ENCODE measurements at regions of chr2 and their contacts with region 1.

Region 1: DNA sequence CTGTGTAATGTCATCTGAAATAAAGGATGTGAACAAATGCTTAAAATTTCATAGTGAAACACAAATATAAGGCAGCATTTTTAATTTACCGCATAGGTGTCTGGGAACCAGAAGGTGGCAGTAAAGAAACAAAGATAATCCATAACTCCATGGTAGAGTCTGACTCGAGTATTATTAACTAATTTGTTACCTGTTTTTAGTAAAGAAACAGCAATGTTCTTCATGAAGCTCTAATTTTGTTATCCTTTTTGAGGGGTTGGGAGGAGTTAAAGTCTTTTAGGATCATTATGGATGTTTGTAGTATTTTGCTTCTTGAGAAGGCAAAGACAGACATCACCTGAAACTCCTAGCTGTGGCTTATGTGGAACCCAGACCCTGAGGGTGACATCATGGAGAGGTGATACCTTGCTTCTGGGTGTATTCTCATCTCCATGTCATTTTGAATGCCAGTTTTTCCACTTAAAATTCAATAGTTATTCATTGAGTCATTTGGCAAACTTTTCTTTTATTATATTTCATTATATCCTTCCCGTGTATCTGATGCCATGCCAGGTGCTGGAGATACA is 286.2 kb upstream of the EPAS1 start:
- DNase-seq: peak; percentile 62 to 72
- ATAC-seq: peak; percentile 73 to 92; a peak in 5 of 6 replicates
- H3K4me3 ChIP-seq: no peak overlapping the region
- H3K27ac ChIP-seq: peak overlapping the region; percentile 12 to 56; a peak in 4 of 6 replicates
- H3K4me1 ChIP-seq: peaks cover 19% of the 10 kb centered on the region
- CTCF ChIP-seq: peak; percentile 96
- EP300 ChIP-seq: no peak
- POLR2A ChIP-seq: no peak
- RAD21 ChIP-seq: peak; percentile 94 to 98

Region 2: GRCh38 chr2:45889053-45889452 is 122.0 kb before region 1 on chr2:
- CTCF ChIA-PET with region 1: no interaction called
- POLR2A ChIA-PET with region 1: no interaction called
- DNase-seq: peak in 1 of 2 experiments; percentile 18
- ATAC-seq: peak; percentile 77 to 83; a peak in 5 of 6 replicates
- H3K4me3 ChIP-seq: no peak overlapping the region
- H3K27ac ChIP-seq: no peak overlapping the region
- H3K4me1 ChIP-seq: no peaks in the 10 kb centered on the region
- CTCF ChIP-seq: no peak
- EP300 ChIP-seq: no peak
- POLR2A ChIP-seq: no peak
- RAD21 ChIP-seq: no peak

Region 3: GRCh38 chr2:46029332-46029811 is 18.4 kb after region 1 on chr2:
- CTCF ChIA-PET with region 1: interaction called, 38 read pairs
- POLR2A ChIA-PET with region 1: no interaction called
- DNase-seq: peak in 1 of 2 experiments; percentile 57
- ATAC-seq: peak in 1 of 2 experiments; percentile 35; a peak in 3 of 6 replicates
- H3K4me3 ChIP-seq: no peak overlapping the region
- H3K27ac ChIP-seq: peak overlapping the region in 1 of 2 experiments; percentile 1; a peak in 2 of 6 replicates
- H3K4me1 ChIP-seq: peaks cover 33% of the 10 kb centered on the region
- CTCF ChIP-seq: peak; percentile 42; the same call in 2 of the 3 replicates
- EP300 ChIP-seq: no peak
- POLR2A ChIP-seq: no peak
- RAD21 ChIP-seq: peak; percentile 18 to 32; a peak in 3 of 5 replicates

Region 4: DNA sequence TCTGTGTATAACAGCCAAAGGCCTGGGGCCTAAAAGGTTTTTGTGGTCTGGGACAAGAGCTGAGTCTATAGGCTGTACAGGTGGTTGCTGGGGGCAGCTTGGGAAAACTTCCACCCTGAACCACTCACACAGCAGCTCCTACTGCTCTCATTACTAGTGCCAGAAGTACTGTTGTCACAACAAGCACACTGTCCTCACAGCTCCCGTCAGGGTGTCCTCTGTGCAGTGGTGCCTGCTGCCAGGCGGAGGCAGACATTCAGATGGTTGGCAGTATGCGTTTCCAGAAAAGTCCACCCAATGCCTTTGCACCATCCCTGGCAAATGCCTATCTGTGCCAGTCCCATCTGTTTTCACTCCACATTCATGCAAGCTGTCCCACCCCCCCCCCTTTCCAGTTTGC is 344.7 kb after region 1 on chr2:
- CTCF ChIA-PET with region 1: interaction called, 25 read pairs
- POLR2A ChIA-PET with region 1: no interaction called
- DNase-seq: no peak
- ATAC-seq: no peak
- H3K4me3 ChIP-seq: no peak overlapping the region
- H3K27ac ChIP-seq: no peak overlapping the region
- H3K4me1 ChIP-seq: no peaks in the 10 kb centered on the region
- CTCF ChIP-seq: no peak
- EP300 ChIP-seq: no peak
- POLR2A ChIP-seq: no peak
- RAD21 ChIP-seq: no peak

Region 5: GRCh38 chr2:46377176-46377581 is 366.2 kb after region 1 on chr2:
- CTCF ChIA-PET with region 1: interaction called, 14 read pairs
- POLR2A ChIA-PET with region 1: no interaction called
- DNase-seq: peak in 1 of 2 experiments; percentile 36
- ATAC-seq: peak in 1 of 2 experiments; percentile 64; a peak in 3 of 6 replicates
- H3K4me3 ChIP-seq: no peak overlapping the region
- H3K27ac ChIP-seq: no peak overlapping the region
- H3K4me1 ChIP-seq: no peaks in the 10 kb centered on the region
- CTCF ChIP-seq: peak; percentile 28; the same call in 2 of the 3 replicates
- EP300 ChIP-seq: no peak
- POLR2A ChIP-seq: no peak
- RAD21 ChIP-seq: peak; percentile 47 to 55; a peak in 4 of 5 replicates

Measured in A549 (cell line).